Gastrocnemius medialis (tissue), 4 donors: ENCODE measurements at regions of chr19 and their contacts with region 1.

Region 1: GRCh38 chr19:12294249-12295158 is at the start of gene ZNF44:
- DNase-seq: peak; percentile 97 to 99
- ATAC-seq: peak; percentile 99 to 100
- H3K4me3 ChIP-seq: peak within 1 kb of the TSS; percentile 72 to 92 (median 88)
- H3K27ac ChIP-seq: peak within 1 kb of the TSS; percentile 84 to 96 (median 93)
- H3K4me1 ChIP-seq: peaks cover 9 to 18% of the 10 kb centered on the region in 2 donors
- H3K27me3 ChIP-seq: no peaks in the 10 kb centered on the region
- CTCF ChIP-seq: peak in 1 of 5 experiments; percentile 11
- POLR2A ChIP-seq: peak; percentile 75 to 78
- total RNA-seq, gene ZNF44: 2.6 to 4.0 (median 3.5) TPM

Region 2: GRCh38 chr19:12194827-12195731 is 99.4 kb before region 1 on chr19:
- in situ Hi-C with region 1: no loop called
- intact Hi-C with region 1: no loop called
- DNase-seq: peak; percentile 3 to 33
- ATAC-seq: peak; percentile 53 to 65
- H3K4me3 ChIP-seq: peak overlapping the region; percentile 34 to 50 (median 49)
- H3K27ac ChIP-seq: peak overlapping the region in 2 of 4 donors; percentile 28 to 47
- H3K4me1 ChIP-seq: no peaks in the 10 kb centered on the region
- H3K27me3 ChIP-seq: no peaks in the 10 kb centered on the region
- CTCF ChIP-seq: no peak
- POLR2A ChIP-seq: no peak

Region 3: GRCh38 chr19:12333162-12334159 is 39.0 kb after region 1 on chr19 and contains the start of gene ZNF563:
- in situ Hi-C with region 1: no loop called
- intact Hi-C with region 1: loop called (anchors 1 kb)
- DNase-seq: peak; percentile 93 to 96
- ATAC-seq: peak; percentile 99
- H3K4me3 ChIP-seq: peak within 1 kb of the TSS; percentile 86 to 100 (median 95)
- H3K27ac ChIP-seq: peak within 1 kb of the TSS; percentile 86 to 92 (median 88)
- H3K4me1 ChIP-seq: peaks cover 10 to 12% of the 10 kb centered on the region in 2 donors
- H3K27me3 ChIP-seq: no peaks in the 10 kb centered on the region
- CTCF ChIP-seq: no peak
- POLR2A ChIP-seq: peak; percentile 67 to 81
- total RNA-seq, gene ZNF563: 1.3 to 2.8 (median 2.2) TPM

Region 4: DNA sequence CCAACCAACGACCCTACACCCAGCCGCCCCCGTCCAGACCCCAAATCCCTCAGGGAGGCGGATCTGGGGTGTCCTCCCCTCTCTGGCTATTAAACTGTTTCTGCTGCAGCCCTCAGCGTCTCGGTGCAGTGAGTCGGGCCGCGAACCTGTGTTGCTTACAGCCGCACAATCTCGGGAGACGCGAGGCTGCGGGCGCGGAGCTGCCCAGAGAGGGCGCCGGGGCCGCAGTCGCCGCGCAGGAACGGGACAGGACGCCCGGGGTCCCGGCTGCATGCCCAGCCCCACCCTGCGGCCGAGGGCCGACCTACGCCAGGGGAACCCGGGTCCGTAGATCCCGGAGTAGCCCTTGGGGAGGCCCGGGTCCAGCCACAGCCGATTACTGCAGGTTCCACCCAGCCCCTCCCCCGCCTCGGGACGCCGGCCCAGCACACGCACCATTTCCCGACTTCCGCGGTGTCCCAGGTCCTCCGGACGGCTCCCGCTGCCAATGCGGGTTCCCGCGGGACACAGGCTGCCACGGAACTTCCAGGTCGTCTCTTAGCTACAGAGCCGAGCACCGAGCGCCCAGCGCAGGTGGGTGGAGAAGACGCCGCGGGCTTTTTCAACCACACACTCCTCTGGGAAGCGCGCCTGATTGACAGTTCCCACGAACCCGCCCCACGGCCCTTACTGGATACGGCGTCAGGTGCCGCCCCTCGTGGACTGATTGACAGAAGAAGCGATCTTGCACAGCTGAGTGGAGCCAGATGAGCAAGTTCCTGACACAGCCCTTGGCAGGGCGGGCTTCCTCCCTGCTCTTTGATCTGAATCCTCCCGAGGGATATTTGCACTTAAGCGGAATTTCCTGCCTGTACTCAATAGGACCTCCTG is 106.4 kb after region 1 on chr19 and contains the start of gene ZNF799:
- in situ Hi-C with region 1: no loop called
- intact Hi-C with region 1: loop called (anchors 2 kb)
- DNase-seq: peak; percentile 96
- ATAC-seq: peak; percentile 98 to 99
- H3K4me3 ChIP-seq: peak within 1 kb of the TSS; percentile 69 to 94 (median 80)
- H3K27ac ChIP-seq: peak within 1 kb of the TSS; percentile 83 to 95 (median 89)
- H3K4me1 ChIP-seq: peaks cover 5 to 6% of the 10 kb centered on the region in 2 donors
- H3K27me3 ChIP-seq: no peaks in the 10 kb centered on the region
- CTCF ChIP-seq: peak in 2 of 5 experiments; percentile 11 to 15
- POLR2A ChIP-seq: peak; percentile 49 to 57
- total RNA-seq, gene ZNF799: 1.3 to 3.6 (median 3.2) TPM

Region 5: DNA sequence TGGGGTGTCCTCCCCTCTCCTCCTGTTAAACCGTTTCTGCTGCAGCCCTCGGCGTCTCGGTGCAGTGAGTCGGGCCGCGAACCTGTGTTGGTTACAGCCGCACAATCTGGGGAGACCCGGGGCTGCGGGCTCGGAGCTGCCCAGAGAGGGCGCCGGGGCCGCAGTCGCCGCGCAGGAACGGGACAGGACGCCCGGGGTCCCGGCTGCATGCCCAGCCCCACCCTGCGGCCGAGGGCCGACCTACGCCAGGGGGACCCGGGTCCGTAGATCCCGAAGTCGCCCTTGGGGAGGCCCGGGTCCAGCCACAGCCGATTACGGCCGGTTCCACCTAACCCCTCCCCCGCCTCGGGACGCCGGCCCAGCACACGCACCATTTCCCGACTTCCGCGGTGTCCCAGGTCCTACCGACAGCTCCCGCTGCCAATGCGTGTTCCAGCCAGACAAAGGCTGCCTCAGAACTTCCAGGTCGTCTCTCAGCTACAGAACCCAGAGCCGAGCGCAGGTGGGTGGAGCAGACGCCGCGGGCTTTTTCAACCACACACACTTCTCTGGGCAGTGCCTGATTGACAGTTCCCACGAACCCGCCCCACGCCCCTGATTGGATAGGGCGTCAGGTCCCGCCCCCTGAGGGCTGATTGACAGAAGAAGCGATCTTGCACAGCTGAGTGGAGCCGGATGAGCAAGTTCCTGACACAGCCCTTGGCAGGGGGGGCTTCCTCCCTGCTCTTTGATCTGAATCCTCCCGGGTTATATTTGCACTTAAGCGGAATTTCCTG is 146.2 kb after region 1 on chr19 and contains the start of gene ZNF443:
- in situ Hi-C with region 1: no loop called
- intact Hi-C with region 1: loop called (anchors 1 kb)
- DNase-seq: peak; percentile 96 to 98
- ATAC-seq: peak; percentile 98 to 99
- H3K4me3 ChIP-seq: peak within 1 kb of the TSS; percentile 78 to 83 (median 80)
- H3K27ac ChIP-seq: peak within 1 kb of the TSS; percentile 81 to 89 (median 84)
- H3K4me1 ChIP-seq: peaks cover 0 to 9% of the 10 kb centered on the region in 2 donors
- H3K27me3 ChIP-seq: no peaks in the 10 kb centered on the region
- CTCF ChIP-seq: no peak
- POLR2A ChIP-seq: peak; percentile 45 to 57
- total RNA-seq, gene ZNF443: 0.95 to 2.3 (median 1.7) TPM